Activated CD4-positive, alpha-beta memory T cell treated with anti-CD3 and anti-CD28 coated beads for 36 hours (primary cell): ENCODE measurements at regions of chr2 and their contacts with region 1.

Region 1: DNA sequence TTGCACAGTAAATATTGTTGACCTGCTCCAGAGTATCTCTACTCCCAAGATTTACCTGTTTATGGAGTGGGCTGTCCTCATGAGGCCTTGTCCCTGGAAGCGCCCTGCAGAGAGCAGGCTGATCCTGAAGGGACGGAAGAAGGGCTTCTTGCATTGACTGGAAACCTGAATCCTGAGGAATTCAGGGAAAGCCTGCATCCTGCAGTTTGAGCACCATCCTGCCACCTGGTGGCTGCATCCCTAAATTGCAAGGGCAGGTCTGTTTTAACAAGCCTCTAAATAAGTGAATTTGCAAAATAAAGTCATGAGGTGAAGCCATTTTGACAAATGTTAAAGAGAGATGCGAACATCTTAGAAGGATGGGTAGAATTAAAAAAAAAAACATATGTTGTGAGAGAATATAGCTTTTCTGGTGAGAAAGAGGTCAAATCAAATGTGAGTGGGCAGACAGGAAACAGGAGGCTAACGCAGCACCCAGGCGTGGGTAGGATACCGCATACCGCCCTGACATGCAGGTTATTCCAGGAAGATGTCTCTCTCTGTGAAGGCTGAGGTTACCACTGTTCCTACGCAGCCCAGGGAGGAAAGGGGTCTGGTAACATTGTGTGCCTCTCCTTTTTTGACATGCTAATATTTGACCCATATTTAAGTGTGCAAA is 754.9 kb downstream of the RNF144A start:
- DNase-seq: peak; percentile 78
- H3K4me3 Mint-ChIP-seq: peak overlapping the region; percentile 45
- H3K27ac Mint-ChIP-seq: peak overlapping the region; percentile 88
- H3K4me1 Mint-ChIP-seq: peaks cover 43% of the 10 kb centered on the region
- H3K27me3 Mint-ChIP-seq: no peaks in the 10 kb centered on the region

Region 2: GRCh38 chr2:7427293-7428060 is 244.7 kb before region 1 on chr2:
- CTCF ChIA-PET with region 1: interaction called, 50 read pairs
- POLR2A ChIA-PET with region 1: interaction called, 3 read pairs
- intact Hi-C with region 1: loop called (anchors 1 kb)
- DNase-seq: no peak
- H3K4me3 Mint-ChIP-seq: peak overlapping the region; percentile 35
- H3K27ac Mint-ChIP-seq: peak overlapping the region; percentile 68
- H3K4me1 Mint-ChIP-seq: peaks cover 38% of the 10 kb centered on the region
- H3K27me3 Mint-ChIP-seq: peaks cover 14% of the 10 kb centered on the region

Region 3: DNA sequence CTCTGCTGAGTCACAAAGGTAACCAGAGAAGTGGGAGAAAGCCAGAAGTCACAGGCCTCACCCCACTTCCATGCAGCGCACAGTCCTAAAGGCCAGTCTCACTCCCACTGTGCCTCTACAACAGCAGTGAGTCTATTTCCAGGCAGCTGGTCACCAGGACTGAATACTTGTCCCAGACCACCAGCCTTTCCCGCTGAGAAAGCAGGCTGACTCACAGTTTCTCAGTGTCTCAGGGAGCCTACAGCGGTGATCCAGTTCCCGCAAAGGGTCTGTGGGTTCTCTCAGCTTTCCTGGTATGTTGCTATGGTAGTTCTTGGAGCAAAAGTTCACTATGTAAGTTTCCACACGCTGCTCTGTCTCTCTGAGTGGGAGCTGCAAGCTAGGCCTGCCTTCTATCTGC is 132.4 kb before region 1 on chr2:
- CTCF ChIA-PET with region 1: no interaction called
- POLR2A ChIA-PET with region 1: no interaction called
- intact Hi-C with region 1: loop called (anchors 2 kb)
- DNase-seq: no peak
- H3K4me3 Mint-ChIP-seq: peak overlapping the region; percentile 20
- H3K27ac Mint-ChIP-seq: peak overlapping the region; percentile 43
- H3K4me1 Mint-ChIP-seq: peaks cover 40% of the 10 kb centered on the region
- H3K27me3 Mint-ChIP-seq: no peaks in the 10 kb centered on the region

Region 4: DNA sequence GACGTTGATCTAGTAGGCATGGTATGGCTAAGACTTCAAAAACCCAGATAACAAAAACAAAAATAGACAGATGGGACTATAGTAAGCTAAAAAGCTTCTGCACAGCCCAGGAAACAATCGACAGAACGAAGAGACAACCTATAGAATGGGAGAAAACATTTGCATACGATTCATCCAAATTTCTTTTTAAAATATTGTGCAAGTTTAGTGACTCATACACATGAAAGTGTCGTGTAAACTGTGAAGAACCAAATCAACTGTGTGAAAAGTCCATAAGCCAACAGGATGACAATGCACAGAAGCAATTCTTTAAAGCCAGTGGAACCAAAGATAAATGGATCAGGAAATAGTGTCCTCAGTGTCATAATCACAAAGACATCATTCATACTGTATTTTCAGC is 83.9 kb before region 1 on chr2:
- CTCF ChIA-PET with region 1: no interaction called
- POLR2A ChIA-PET with region 1: no interaction called
- intact Hi-C with region 1: loop called (anchors 5 kb)
- DNase-seq: no peak
- H3K4me3 Mint-ChIP-seq: no peak overlapping the region
- H3K27ac Mint-ChIP-seq: peak overlapping the region; percentile 71
- H3K4me1 Mint-ChIP-seq: peaks cover 31% of the 10 kb centered on the region
- H3K27me3 Mint-ChIP-seq: peaks cover 3% of the 10 kb centered on the region

Region 5: GRCh38 chr2:7685342-7686015 is 13.3 kb after region 1 on chr2:
- CTCF ChIA-PET with region 1: interaction called, 13 read pairs
- POLR2A ChIA-PET with region 1: no interaction called
- intact Hi-C with region 1: no loop called
- DNase-seq: no peak
- H3K4me3 Mint-ChIP-seq: no peak overlapping the region
- H3K27ac Mint-ChIP-seq: no peak overlapping the region
- H3K4me1 Mint-ChIP-seq: no peaks in the 10 kb centered on the region
- H3K27me3 Mint-ChIP-seq: no peaks in the 10 kb centered on the region

Region 6: GRCh38 chr2:7725171-7725849 is 53.2 kb after region 1 on chr2:
- CTCF ChIA-PET with region 1: interaction called, 8 read pairs
- POLR2A ChIA-PET with region 1: interaction called, 3 read pairs
- intact Hi-C with region 1: loop called (anchors 5 kb)
- DNase-seq: peak; percentile 46
- H3K4me3 Mint-ChIP-seq: peak overlapping the region; percentile 68
- H3K27ac Mint-ChIP-seq: peak overlapping the region; percentile 80
- H3K4me1 Mint-ChIP-seq: peaks cover 36% of the 10 kb centered on the region
- H3K27me3 Mint-ChIP-seq: no peaks in the 10 kb centered on the region